ENCODE measurements at regions of chr2 and their contacts with region 1.

Region 1: DNA sequence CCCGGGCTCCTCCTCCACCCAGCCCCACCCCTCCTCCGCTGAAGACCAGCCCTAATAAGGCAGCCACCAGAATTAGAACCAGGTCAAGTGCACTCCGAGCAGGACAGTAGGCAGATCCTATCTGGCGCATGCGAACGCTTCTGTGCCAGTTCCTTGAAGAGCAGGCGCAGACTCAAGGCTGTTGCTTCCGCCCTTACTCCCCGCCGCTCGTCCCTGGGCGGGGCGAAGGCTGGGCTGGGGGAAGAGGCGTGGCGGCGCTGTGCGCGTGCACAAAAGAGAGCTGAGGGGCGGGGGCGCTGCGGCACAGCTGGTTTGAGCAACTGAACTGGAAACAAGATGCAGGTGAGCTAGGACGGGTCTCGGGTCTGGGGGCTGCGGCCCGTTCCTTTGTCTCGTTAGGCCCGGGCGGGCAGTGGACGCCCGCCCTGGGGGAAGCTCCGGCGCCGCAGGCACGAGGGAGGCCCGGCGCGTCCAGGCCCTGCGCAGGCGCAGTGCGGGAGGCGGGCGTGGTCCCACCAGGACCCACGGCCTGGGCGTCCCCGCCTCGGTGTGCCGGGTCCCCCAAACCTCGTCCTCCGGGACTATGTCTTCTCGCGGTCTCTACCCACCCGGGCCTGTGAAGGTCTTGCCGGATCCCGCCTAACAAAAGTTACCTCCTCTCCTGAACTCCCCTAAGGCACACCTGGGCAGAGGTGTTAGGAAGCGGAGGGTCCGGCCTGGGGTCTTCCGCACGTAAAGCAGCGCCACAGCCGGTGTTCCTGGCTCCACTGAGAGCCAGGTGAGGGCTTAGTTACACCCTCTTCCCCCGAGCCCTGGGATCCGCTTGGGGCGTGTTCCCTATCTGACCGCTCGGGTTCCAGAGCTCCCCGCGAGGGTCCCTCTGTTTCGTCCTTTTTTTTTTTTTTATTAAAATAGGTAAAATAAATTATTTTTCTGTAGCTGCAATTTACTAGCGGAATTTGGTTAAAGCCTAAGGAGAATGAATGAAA is at the start of gene PDCL3:
- DNase-seq: peak; percentile 98
- ATAC-seq: peak; percentile 96
- H3K4me3 ChIP-seq: peak within 1 kb of the TSS; percentile 63 to 100 (median 99)
- H3K27ac ChIP-seq: peak within 1 kb of the TSS; percentile 87
- H3K4me1 ChIP-seq: peaks cover 47% of the 10 kb centered on the region
- H3K27me3 ChIP-seq: no peaks in the 10 kb centered on the region; a peak in 1 of 5 replicates
- CTCF ChIP-seq: peak; percentile 64
- EP300 ChIP-seq: no peak
- POLR2A ChIP-seq: peak; percentile 83 to 91
- RAD21 ChIP-seq: peak; percentile 66
- total RNA-seq, gene PDCL3: 24.4 and 36.9 TPM in 2 replicates

Region 2: GRCh38 chr2:100407108-100407507 is 155.9 kb before region 1 on chr2:
- CTCF ChIA-PET with region 1: no interaction called
- POLR2A ChIA-PET with region 1: no interaction called
- in situ Hi-C with region 1: no loop called
- intact Hi-C with region 1: no loop called
- DNase-seq: no peak
- ATAC-seq: no peak
- H3K4me3 ChIP-seq: no peak overlapping the region
- H3K27ac ChIP-seq: no peak overlapping the region
- H3K4me1 ChIP-seq: no peaks in the 10 kb centered on the region
- H3K27me3 ChIP-seq: no peaks in the 10 kb centered on the region
- CTCF ChIP-seq: no peak
- EP300 ChIP-seq: no peak
- POLR2A ChIP-seq: no peak
- RAD21 ChIP-seq: no peak

Region 3: DNA sequence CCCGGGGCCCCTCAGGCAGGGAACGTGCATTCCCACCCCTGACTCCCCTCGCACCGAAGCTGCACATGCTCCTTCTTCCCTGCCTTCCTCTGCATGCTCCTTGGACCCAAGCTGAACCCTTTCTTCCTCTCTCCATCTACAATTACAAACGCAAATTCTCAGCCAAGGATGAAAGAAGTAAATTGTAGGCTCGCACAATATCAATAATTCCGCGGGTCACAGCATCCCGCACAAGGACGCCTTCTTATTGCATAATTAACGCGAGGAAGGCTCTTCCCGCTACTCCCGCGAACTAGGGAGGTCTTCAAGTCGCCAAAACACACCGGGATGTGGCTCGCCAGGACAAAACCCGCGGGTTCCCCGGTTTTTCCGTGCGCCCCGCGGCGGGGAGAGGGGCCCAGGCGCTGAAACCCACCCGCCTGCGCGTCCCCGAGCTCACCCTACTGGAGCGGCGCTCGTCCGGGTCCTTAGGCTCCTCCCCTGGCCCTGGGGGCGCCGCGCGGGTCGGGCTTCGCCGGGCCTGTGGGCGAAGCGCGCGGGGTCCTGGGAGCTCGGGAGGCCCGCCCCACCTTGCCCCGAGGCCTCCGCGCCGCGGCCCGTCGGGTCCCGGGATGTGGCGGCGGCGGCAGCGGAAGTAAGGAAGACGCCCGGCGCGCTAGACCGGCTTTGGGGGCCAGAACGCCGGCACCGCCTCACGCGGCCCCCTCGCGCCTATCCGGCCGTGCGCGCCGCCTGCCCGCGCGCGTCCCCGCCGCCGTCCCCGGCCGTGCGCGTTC is 145.9 kb before region 1 on chr2 and contains the start of gene CHST10:
- CTCF ChIA-PET with region 1: no interaction called
- POLR2A ChIA-PET with region 1: interaction called, 9 read pairs
- in situ Hi-C with region 1: no loop called
- intact Hi-C with region 1: loop called (anchors 5 kb)
- DNase-seq: peak; percentile 42
- ATAC-seq: peak; percentile 98
- H3K4me3 ChIP-seq: peak within 1 kb of the TSS; percentile 70 to 86 (median 76)
- H3K27ac ChIP-seq: peak within 1 kb of the TSS; percentile 39
- H3K4me1 ChIP-seq: peaks cover 29% of the 10 kb centered on the region
- H3K27me3 ChIP-seq: no peaks in the 10 kb centered on the region; a peak in 1 of 5 replicates
- CTCF ChIP-seq: peak; percentile 5; the same call in 1 of the 2 replicates
- EP300 ChIP-seq: no peak
- POLR2A ChIP-seq: peak; percentile 45 to 68; a peak in 3 of 4 replicates
- RAD21 ChIP-seq: no peak; the same call in 1 of the 2 replicates
- total RNA-seq, gene CHST10: 8.5 and 14.2 TPM in 2 replicates